ENCODE measurements at regions of chr11 and their contacts with region 1.

Region 1: DNA sequence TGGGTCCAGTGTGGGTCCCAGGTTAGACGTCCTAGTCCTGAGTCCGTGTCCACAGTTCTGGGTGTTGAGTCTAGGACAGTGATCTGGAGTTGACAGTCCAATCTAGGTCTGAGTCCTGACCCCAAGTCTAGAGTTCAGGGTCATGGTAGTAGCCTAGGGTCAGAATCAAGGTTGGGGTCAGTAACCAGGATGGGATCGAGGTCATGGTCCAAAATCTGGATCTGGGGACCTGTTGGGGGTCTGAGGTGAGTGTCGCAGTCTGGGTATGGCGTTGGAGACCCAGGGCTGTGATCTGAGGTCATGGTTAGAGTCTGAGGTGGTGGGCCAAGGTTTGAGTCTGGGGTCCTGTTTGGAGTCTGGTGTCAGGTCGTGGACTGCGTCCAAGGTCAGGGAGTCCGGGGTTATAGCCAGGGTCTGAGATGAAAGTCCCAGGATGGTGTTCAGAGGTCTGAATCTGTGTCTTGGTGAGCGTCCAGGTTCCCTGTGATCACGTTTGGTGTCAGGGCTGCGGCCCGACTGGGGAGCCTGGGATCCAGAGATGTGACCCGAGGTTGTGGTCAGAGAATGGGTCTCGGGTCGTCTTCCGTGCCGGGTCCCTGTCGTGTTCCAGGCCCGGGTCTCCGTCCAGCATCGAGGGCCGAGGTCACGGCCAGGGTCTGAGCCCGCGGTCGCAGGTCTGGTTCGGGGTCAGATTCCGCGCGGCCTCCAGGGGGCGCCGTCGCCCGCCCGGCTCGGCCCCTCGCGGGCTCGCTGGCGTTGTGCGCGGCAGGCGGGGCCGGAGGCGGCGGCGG is 445 bp upstream of the GRK2 start:
- DNase-seq: peak; percentile 77
- H3K4me3 Mint-ChIP-seq: peak overlapping the region; percentile 78
- H3K27ac Mint-ChIP-seq: peak overlapping the region; percentile 85
- H3K4me1 Mint-ChIP-seq: peaks cover 65% of the 10 kb centered on the region
- H3K27me3 Mint-ChIP-seq: no peaks in the 10 kb centered on the region

Region 2: GRCh38 chr11:67277231-67277961 is 11.6 kb after region 1 on chr11:
- intact Hi-C with region 1: loop called (anchors 1 kb)
- DNase-seq: peak; percentile 90
- H3K4me3 Mint-ChIP-seq: peak overlapping the region; percentile 71
- H3K27ac Mint-ChIP-seq: peak overlapping the region; percentile 98
- H3K4me1 Mint-ChIP-seq: peaks cover 43% of the 10 kb centered on the region
- H3K27me3 Mint-ChIP-seq: no peaks in the 10 kb centered on the region

Region 3: GRCh38 chr11:67317205-67317887 is 51.5 kb after region 1 on chr11:
- intact Hi-C with region 1: loop called (anchors 1 kb)
- DNase-seq: peak; percentile 98
- H3K4me3 Mint-ChIP-seq: peak overlapping the region; percentile 96
- H3K27ac Mint-ChIP-seq: peak overlapping the region; percentile 98
- H3K4me1 Mint-ChIP-seq: peaks cover 32% of the 10 kb centered on the region
- H3K27me3 Mint-ChIP-seq: peaks cover 3% of the 10 kb centered on the region

Region 4: GRCh38 chr11:67391304-67392132 is 125.7 kb after region 1 on chr11 and contains the start of gene RAD9A:
- intact Hi-C with region 1: loop called (anchors 5 kb)
- DNase-seq: peak; percentile 89
- H3K4me3 Mint-ChIP-seq: peak within 1 kb of the TSS; percentile 89
- H3K27ac Mint-ChIP-seq: peak within 1 kb of the TSS; percentile 52
- H3K4me1 Mint-ChIP-seq: peaks cover 27% of the 10 kb centered on the region
- H3K27me3 Mint-ChIP-seq: no peaks in the 10 kb centered on the region
- total RNA-seq, gene RAD9A: 32.1 and 34.1 TPM in 2 replicates

Region 5: GRCh38 chr11:67482825-67483798 is 217.3 kb after region 1 on chr11 and contains the start of gene AIP:
- intact Hi-C with region 1: loop called (anchors 2 kb)
- DNase-seq: peak; percentile 98
- H3K4me3 Mint-ChIP-seq: peak within 1 kb of the TSS; percentile 83
- H3K27ac Mint-ChIP-seq: peak within 1 kb of the TSS; percentile 99
- H3K4me1 Mint-ChIP-seq: peaks cover 42% of the 10 kb centered on the region
- H3K27me3 Mint-ChIP-seq: no peaks in the 10 kb centered on the region
- total RNA-seq, gene AIP: 190 and 191 TPM in 2 replicates